ENCODE measurements at regions of chr12 and their contacts with region 1.

Region 1: GRCh38 chr12:50132505-50133135 is 20.6 kb downstream of the COX14 start:
- DNase-seq: no peak
- H3K4me3 ChIP-seq: no peak overlapping the region
- H3K27ac ChIP-seq: no peak overlapping the region
- H3K4me1 ChIP-seq: no peaks in the 10 kb centered on the region
- H3K27me3 ChIP-seq: no peaks in the 10 kb centered on the region
- CTCF ChIP-seq: peak in 3 of 4 experiments; percentile 18 to 65 (median 42)
- POLR2A ChIP-seq: no peak

Region 2: GRCh38 chr12:50174971-50175715 is 42.5 kb after region 1 on chr12:
- intact Hi-C with region 1: loop called (anchors 5 kb)
- DNase-seq: peak; percentile 33
- H3K4me3 ChIP-seq: no peak overlapping the region
- H3K27ac ChIP-seq: no peak overlapping the region
- H3K4me1 ChIP-seq: no peaks in the 10 kb centered on the region
- H3K27me3 ChIP-seq: no peaks in the 10 kb centered on the region
- CTCF ChIP-seq: peak; percentile 50 to 86 (median 74)
- POLR2A ChIP-seq: no peak